ENCODE measurements at regions of chr1 and their contacts with region 1.

Region 1: DNA sequence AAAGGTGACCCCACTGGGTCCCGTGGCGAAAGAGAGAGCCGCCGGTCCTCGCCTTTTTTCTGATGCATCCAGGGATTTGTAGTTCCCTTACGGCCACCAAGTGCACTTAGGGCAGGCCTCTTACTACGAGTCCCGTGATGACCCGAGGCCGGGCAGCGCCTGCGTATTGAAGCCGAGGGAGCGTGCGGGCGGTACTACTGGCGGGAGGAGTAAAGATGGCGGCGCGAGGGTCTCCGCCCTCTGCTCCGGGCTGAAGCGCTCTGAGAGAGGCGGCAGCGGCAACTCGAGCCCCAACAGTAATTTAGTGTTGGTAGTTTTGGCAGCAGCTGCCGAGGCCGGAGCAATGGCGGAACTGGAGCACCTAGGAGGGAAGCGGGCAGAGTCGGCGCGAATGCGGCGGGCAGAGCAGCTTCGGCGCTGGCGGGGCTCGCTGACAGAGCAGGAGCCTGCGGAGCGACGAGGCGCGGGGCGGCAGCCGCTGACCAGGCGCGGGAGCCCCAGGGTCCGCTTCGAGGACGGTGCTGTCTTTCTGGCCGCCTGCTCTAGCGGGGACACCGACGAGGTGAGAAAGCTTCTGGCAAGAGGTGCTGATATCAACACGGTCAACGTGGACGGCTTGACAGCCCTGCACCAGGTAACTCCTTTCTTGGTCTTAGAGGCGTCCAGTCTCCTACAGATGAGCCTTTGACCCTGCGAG is at the start of gene PPP1R12B:
- DNase-seq: peak; percentile 98
- H3K4me3 Mint-ChIP-seq: peak within 1 kb of the TSS; percentile 96
- H3K27ac Mint-ChIP-seq: peak within 1 kb of the TSS; percentile 81
- H3K4me1 Mint-ChIP-seq: peaks cover 36% of the 10 kb centered on the region
- H3K27me3 Mint-ChIP-seq: no peaks in the 10 kb centered on the region
- CTCF ChIP-seq: no peak
- total RNA-seq, gene PPP1R12B: 31.8 and 32.9 TPM in 2 replicates

Region 2: GRCh38 chr1:202362212-202362611 is 13.6 kb after region 1 on chr1:
- CTCF ChIA-PET with region 1: no interaction called
- intact Hi-C with region 1: no loop called
- DNase-seq: no peak
- H3K4me3 Mint-ChIP-seq: no peak overlapping the region
- H3K27ac Mint-ChIP-seq: no peak overlapping the region
- H3K4me1 Mint-ChIP-seq: no peaks in the 10 kb centered on the region
- H3K27me3 Mint-ChIP-seq: no peaks in the 10 kb centered on the region
- CTCF ChIP-seq: no peak

Region 3: GRCh38 chr1:202571347-202572339 is 223.0 kb after region 1 on chr1:
- CTCF ChIA-PET with region 1: no interaction called
- intact Hi-C with region 1: loop called (anchors 5 kb)
- DNase-seq: peak; percentile 60
- H3K4me3 Mint-ChIP-seq: no peak overlapping the region
- H3K27ac Mint-ChIP-seq: no peak overlapping the region
- H3K4me1 Mint-ChIP-seq: no peaks in the 10 kb centered on the region
- H3K27me3 Mint-ChIP-seq: no peaks in the 10 kb centered on the region
- CTCF ChIP-seq: peak; percentile 75

Region 4: DNA sequence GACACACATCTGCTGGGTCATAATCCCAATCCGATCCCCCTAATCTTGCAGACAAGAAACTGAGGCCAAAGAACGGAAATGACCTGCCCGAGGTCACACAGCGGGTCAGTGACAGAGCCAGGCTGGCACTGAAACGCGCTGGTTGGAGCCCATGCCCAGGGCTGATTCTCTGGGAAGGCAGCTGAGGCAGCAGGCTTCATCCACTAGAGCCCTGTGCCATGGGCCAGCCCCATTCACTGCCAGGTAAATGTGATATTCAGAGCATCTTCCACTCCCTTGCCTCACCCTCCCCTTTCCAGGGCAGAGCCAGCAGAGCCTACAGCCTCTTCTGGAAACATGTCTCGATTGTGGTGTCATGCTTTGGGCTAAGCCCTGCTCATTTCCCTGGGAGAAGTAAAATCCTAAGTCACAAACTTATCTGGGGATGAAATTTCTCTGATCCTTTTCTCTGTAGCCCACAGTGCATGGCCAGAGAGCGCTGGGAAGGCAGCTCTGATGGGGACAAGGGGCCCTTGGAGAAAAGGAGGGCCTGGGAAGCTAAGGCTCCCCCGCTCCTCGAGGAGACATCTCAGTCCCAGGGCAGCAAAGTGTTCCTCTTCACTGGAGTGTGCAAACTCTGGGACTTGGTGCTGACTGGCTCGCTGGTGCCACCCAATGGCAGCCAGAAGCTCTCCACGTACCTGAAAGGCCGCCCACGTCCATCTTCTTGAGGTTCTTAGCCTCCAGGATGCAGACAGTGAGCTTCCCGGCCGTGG is 251.2 kb after region 1 on chr1:
- CTCF ChIA-PET with region 1: no interaction called
- intact Hi-C with region 1: no loop called
- DNase-seq: peak; percentile 80
- H3K4me3 Mint-ChIP-seq: no peak overlapping the region
- H3K27ac Mint-ChIP-seq: no peak overlapping the region
- H3K4me1 Mint-ChIP-seq: no peaks in the 10 kb centered on the region
- H3K27me3 Mint-ChIP-seq: no peaks in the 10 kb centered on the region
- CTCF ChIP-seq: peak; percentile 83

Region 5: GRCh38 chr1:202852163-202852904 is 503.7 kb after region 1 on chr1:
- CTCF ChIA-PET with region 1: no interaction called
- intact Hi-C with region 1: no loop called
- DNase-seq: peak; percentile 62
- H3K4me3 Mint-ChIP-seq: no peak overlapping the region
- H3K27ac Mint-ChIP-seq: no peak overlapping the region
- H3K4me1 Mint-ChIP-seq: no peaks in the 10 kb centered on the region
- H3K27me3 Mint-ChIP-seq: no peaks in the 10 kb centered on the region
- CTCF ChIP-seq: peak; percentile 64